Ascending aorta (tissue), 2 donors: ENCODE measurements at regions of chr4 and their contacts with region 1.

Region 1: DNA sequence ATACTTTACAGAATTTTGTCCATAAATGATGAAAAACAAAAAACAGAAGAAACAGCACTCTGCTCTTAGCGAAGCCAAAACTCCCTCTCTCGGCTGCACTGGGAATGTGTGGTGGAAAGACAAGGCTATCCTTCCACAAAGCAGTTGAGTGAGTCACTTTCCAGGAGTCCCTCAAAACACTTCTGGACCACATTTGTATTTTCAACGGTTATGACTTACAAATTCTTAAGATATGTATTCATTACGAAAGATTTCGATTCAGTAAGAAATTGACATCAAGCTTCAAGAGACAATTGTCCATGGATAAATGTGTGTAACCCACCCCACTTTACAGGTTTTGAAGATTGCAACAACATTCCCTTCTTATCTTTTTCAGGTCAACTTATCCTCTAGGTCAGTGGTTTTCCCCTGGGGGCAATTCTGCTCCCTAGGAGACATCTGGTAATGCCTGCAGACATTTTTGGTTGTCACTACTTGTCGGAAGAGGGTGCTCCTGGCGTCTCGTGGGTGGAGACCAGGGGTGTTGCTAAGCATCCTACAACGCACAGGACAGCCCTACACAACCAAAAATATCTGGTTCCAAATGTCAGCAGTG is 66.7 kb upstream of the MTNR1A start:
- DNase-seq: no peak
- H3K4me3 ChIP-seq: no peak overlapping the region
- H3K27ac ChIP-seq: peak overlapping the region; percentile 71 to 76
- H3K4me1 ChIP-seq: peaks cover 7 to 39% of the 10 kb centered on the region in 2 donors
- H3K27me3 ChIP-seq: no peaks in the 10 kb centered on the region
- CTCF ChIP-seq: peak; percentile 22 to 53 (median 45)

Region 2: DNA sequence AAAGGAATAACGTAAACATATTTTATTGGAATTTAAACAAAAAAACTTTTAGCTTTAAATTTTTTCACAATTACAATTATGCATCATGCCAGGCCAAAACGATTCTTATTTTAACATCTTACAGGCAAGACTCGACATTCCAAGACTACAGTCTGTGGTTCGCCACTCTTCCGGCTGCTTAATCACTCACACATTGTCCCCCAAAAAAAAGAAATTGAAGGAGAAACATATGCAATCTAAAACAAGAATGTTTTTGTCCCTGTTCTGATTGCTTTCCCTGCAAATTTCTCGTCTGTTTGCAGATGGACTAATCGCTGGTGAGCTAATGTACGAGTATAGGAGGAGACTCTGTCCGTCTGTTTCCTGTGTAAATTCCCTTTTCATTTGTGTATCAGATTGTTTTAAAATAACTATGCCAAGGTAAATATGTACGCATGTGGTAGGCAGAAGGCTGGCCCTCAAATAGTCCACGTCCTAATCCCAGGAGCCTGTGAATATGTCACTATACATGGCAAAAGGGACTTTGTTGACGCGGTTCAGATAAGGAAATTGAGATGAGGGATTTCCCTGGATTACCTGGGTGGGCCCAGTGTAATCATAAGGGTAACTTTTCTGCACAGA is 29.0 kb before region 1 on chr4:
- intact Hi-C with region 1: no loop called
- DNase-seq: no peak
- H3K4me3 ChIP-seq: no peak overlapping the region
- H3K27ac ChIP-seq: no peak overlapping the region
- H3K4me1 ChIP-seq: no peaks in the 10 kb centered on the region
- H3K27me3 ChIP-seq: no peaks in the 10 kb centered on the region
- CTCF ChIP-seq: no peak

Region 3: GRCh38 chr4:186651624-186652023 is 29.6 kb after region 1 on chr4:
- intact Hi-C with region 1: loop called (anchors 2 kb)
- DNase-seq: peak; percentile 24 to 85
- H3K4me3 ChIP-seq: peak overlapping the region; percentile 44 to 63
- H3K27ac ChIP-seq: peak overlapping the region; percentile 58 to 63
- H3K4me1 ChIP-seq: peaks cover 0 to 9% of the 10 kb centered on the region in 2 donors
- H3K27me3 ChIP-seq: no peaks in the 10 kb centered on the region
- CTCF ChIP-seq: no peak

Region 4: DNA sequence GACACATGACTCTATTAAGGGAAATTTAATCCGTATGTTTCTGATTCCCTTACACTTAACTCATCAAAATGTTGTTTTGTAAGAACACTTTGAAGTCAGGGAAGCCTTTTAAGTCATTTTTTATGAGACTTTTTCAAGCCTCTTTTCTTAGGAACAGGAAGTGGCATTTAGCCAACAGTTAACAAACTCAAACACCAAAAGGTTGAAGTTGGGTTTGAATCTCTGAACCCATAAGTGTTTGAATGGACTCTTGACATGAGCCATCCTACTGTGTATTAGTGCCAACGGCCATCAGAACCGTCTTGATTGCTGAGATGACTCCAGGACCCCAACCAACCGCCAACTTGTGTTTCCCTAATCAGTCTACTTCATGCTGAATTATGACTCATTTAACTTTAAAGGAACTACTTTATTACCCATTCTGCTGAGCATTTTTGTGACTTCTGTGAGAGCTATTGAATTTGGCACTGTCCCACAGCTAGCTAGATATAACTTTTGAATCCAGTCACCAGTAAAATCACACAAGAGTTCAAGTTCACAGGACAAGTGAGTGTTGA is 310.7 kb after region 1 on chr4:
- intact Hi-C with region 1: no loop called
- DNase-seq: no peak
- H3K4me3 ChIP-seq: no peak overlapping the region
- H3K27ac ChIP-seq: no peak overlapping the region
- H3K4me1 ChIP-seq: peaks cover 0 to 3% of the 10 kb centered on the region in 2 donors
- H3K27me3 ChIP-seq: no peaks in the 10 kb centered on the region
- CTCF ChIP-seq: no peak